Activated T-helper 1 cell treated with anti-CD3 and anti-CD28 coated beads, Interleukin-12 subunit alpha, Interleukin-12 subunit beta, Interleukin-2, Interleukin-4 antibody, amounts not matched to agents 30 ng/mL and 10 ng/mL and 1 ng/mL, durations not matched to agents 14 hours and 24 hours and 36 hours (primary cell): ENCODE measurements at regions of chr1 and their contacts with region 1.

Region 1: DNA sequence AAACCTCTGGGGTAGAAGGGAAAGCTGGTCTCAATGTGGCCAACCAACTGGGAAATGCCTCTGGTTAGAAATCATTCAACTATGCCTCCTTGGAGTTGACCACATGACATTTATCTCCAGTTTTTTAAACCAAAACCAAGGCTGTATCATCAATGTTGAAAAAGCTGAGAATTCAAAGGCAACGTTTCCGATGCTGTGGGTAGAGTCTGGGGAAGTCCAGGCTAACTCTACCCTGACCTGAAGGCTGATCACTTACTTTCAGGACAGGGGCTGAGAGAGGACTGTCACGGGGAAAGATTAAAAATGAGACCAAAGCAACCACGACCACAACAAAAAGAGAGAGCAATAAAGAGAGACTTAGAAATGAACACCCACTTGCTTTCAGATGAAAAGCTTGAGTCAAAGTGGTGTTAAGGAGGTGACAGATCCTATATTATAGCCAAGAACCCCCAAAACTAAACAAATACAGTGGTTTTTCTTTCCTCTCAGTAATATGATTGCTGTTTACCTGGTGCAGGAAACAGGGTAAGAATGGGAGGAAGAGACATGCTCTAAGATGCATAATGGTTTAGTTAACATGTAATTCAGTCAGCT is 90.8 kb upstream of the TNFSF4 start:
- DNase-seq: peak; percentile 15
- H3K4me3 Mint-ChIP-seq: peak overlapping the region; percentile 16
- H3K27ac Mint-ChIP-seq: peak overlapping the region; percentile 37
- H3K4me1 Mint-ChIP-seq: peaks cover 24% of the 10 kb centered on the region
- H3K27me3 Mint-ChIP-seq: peaks cover 8% of the 10 kb centered on the region

Region 2: DNA sequence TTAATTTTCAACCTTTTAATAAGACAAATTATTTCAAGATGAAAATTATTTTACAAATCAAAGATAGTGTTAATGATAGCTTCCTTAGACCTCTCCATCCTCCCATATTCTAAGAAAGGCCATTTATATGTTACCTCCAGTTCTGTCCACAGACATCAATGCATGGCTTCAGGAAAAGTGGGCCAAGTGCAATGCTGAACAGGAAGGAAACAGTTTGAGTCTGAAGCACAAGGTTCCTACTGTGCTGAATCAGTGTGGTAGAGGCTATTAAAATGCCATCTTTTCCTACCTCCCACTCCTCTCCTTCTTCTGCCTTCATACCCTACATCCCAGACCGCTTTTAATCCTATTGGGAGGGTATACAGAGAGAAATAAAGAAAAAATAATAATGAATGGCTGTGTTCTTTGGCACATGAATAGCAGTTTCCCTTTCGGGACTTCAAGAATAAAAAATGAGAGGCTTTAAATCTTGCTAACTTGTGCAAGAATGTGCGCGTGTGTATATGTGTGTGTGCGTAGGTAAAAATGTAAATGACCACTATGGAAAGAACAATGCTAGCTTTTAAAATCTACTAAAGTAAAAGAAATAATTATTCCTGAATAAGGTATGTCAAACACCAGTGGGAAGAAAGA is 940.0 kb before region 1 on chr1:
- intact Hi-C with region 1: loop called (anchors 2 kb)
- DNase-seq: no peak
- H3K4me3 Mint-ChIP-seq: peak overlapping the region; percentile 6
- H3K27ac Mint-ChIP-seq: peak overlapping the region; percentile 83
- H3K4me1 Mint-ChIP-seq: peaks cover 56% of the 10 kb centered on the region
- H3K27me3 Mint-ChIP-seq: no peaks in the 10 kb centered on the region

Region 3: GRCh38 chr1:172761581-172762025 is 536.3 kb before region 1 on chr1:
- intact Hi-C with region 1: loop called (anchors 5 kb)
- DNase-seq: no peak
- H3K4me3 Mint-ChIP-seq: no peak overlapping the region
- H3K27ac Mint-ChIP-seq: no peak overlapping the region
- H3K4me1 Mint-ChIP-seq: peaks cover 42% of the 10 kb centered on the region
- H3K27me3 Mint-ChIP-seq: peaks cover 6% of the 10 kb centered on the region

Region 4: GRCh38 chr1:172870901-172871606 is 426.8 kb before region 1 on chr1:
- intact Hi-C with region 1: loop called (anchors 1 kb)
- DNase-seq: no peak
- H3K4me3 Mint-ChIP-seq: no peak overlapping the region
- H3K27ac Mint-ChIP-seq: no peak overlapping the region
- H3K4me1 Mint-ChIP-seq: peaks cover 32% of the 10 kb centered on the region
- H3K27me3 Mint-ChIP-seq: peaks cover 39% of the 10 kb centered on the region

Region 5: DNA sequence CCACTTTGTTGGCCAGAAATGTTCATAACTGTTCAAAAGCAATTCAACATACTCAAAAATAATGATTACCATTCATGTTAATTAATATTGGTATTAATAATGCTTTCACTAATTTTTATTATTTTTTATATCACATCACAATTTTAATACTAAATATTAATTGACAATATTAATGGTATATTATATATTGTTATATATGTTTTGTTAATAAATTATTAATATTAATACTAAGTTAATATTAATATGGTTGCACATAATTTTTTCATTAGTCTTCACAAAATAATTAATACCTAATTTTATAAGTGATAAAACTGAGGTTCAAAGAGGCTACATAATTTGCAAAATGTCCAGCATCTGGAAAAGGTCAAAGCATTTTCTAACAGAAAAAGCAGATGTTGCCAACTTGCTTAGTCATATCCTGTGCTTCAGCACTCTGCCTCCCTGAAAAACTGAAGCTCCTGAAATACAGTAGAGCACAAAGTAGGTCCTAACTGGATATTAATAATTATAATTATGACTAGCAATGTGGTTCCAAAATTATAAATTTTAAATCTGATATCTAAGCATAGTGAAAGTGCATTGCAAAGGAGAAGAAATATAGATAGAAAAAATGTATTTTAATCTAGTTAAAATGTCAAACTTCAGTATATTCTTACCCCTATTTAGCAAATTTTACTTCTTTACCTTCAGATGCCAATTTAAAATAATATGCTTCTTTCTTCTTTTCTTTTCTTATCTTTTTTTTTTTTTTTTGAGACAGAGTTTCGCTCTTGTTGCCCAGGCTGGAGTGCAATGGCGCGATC is 32.5 kb after region 1 on chr1:
- intact Hi-C with region 1: loop called (anchors 2 kb)
- DNase-seq: no peak
- H3K4me3 Mint-ChIP-seq: peak overlapping the region; percentile 58
- H3K27ac Mint-ChIP-seq: no peak overlapping the region
- H3K4me1 Mint-ChIP-seq: peaks cover 19% of the 10 kb centered on the region
- H3K27me3 Mint-ChIP-seq: no peaks in the 10 kb centered on the region

Region 6: GRCh38 chr1:173714759-173715537 is 417.1 kb after region 1 on chr1 and contains the start of gene KLHL20:
- intact Hi-C with region 1: loop called (anchors 1 kb)
- DNase-seq: peak; percentile 84
- H3K4me3 Mint-ChIP-seq: peak within 1 kb of the TSS; percentile 93
- H3K27ac Mint-ChIP-seq: peak within 1 kb of the TSS; percentile 98
- H3K4me1 Mint-ChIP-seq: peaks cover 30% of the 10 kb centered on the region
- H3K27me3 Mint-ChIP-seq: peaks cover 14% of the 10 kb centered on the region
- total RNA-seq, gene KLHL20: 17.8 and 18.3 TPM in 2 replicates